ENCODE measurements at regions of chr4 and their contacts with region 1.

Region 1: GRCh38 chr4:81466841-81467671 is 4.7 kb downstream of the RASGEF1B start:
- DNase-seq: no peak
- ATAC-seq: no peak

Region 2: GRCh38 chr4:81594490-81595159 is 127.6 kb after region 1 on chr4:
- intact Hi-C with region 1: no loop called
- DNase-seq: no peak
- ATAC-seq: no peak

Region 3: GRCh38 chr4:81844717-81845116 is 377.7 kb after region 1 on chr4:
- intact Hi-C with region 1: loop called (anchors 1 kb)
- DNase-seq: peak; percentile 66
- ATAC-seq: peak; percentile 97